ENCODE measurements at regions of chr21 and their contacts with region 1.

Region 1: GRCh38 chr21:36927719-36928117 is 38.8 kb downstream of the HLCS start:
- DNase-seq: peak; percentile 80
- H3K4me3 ChIP-seq: no peak overlapping the region
- H3K27ac ChIP-seq: no peak overlapping the region
- H3K4me1 ChIP-seq: no peaks in the 10 kb centered on the region
- H3K27me3 ChIP-seq: no peaks in the 10 kb centered on the region
- CTCF ChIP-seq: peak; percentile 82 to 89
- POLR2A ChIP-seq: no peak

Region 2: GRCh38 chr21:36504067-36505058 is 423.4 kb before region 1 on chr21:
- CTCF ChIA-PET with region 1: interaction called, 7 read pairs
- POLR2A ChIA-PET with region 1: no interaction called
- dilution Hi-C with region 1: no loop called
- intact Hi-C with region 1: loop called (anchors 1 kb)
- DNase-seq: peak; percentile 55
- H3K4me3 ChIP-seq: no peak overlapping the region
- H3K27ac ChIP-seq: no peak overlapping the region
- H3K4me1 ChIP-seq: no peaks in the 10 kb centered on the region
- H3K27me3 ChIP-seq: no peaks in the 10 kb centered on the region
- CTCF ChIP-seq: peak; percentile 61 to 67
- POLR2A ChIP-seq: no peak

Region 3: DNA sequence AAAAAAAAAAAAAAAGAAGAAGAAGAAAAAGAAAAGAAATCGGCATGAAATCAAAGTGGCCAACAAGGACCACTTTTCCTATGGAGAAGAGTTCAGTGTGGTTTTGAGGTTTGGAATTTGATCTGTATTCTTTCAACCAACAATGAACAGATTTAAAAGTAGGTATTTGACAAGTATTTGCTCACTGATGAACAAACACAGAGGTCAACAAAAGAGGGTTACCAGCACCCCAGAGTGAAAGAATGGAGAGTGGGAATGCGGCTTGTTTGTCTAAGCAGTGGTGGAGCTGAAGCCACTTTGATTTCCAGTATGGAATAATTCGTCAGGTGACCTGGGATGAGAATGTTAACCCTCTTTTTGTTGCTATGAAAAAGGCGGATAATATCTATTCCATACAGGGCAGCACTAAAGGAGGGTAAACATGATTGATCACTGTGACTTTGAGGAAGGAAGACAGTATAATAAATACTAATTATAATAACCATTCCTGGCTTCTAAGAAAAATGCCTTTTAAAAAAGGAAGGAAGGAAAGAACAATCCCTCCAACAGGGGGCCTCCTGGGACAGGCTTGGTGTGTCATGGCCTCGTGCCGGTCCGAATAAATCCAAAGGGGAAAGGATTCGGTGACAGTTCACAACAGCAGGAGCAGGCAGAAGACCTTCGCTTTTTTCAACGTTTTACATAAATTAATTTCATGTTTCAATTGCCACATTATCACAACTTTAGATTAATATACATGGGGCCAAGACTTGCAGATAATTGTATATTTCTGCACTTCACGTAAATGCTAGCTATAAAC is 266.0 kb before region 1 on chr21:
- CTCF ChIA-PET with region 1: interaction called, 12 read pairs
- POLR2A ChIA-PET with region 1: no interaction called
- dilution Hi-C with region 1: no loop called
- intact Hi-C with region 1: loop called (anchors 1 kb)
- DNase-seq: peak; percentile 41
- H3K4me3 ChIP-seq: no peak overlapping the region
- H3K27ac ChIP-seq: no peak overlapping the region
- H3K4me1 ChIP-seq: no peaks in the 10 kb centered on the region
- H3K27me3 ChIP-seq: peaks cover 16 to 27% of the 10 kb centered on the region in 2 experiments
- CTCF ChIP-seq: peak; percentile 47 to 51
- POLR2A ChIP-seq: no peak

Region 4: GRCh38 chr21:36698981-36699891 is 228.5 kb before region 1 on chr21 and contains the start of gene SIM2:
- CTCF ChIA-PET with region 1: no interaction called
- POLR2A ChIA-PET with region 1: no interaction called
- dilution Hi-C with region 1: no loop called
- intact Hi-C with region 1: loop called (anchors 5 kb)
- DNase-seq: no peak
- H3K4me3 ChIP-seq: peak within 1 kb of the TSS in 1 of 3 experiments; percentile 6
- H3K27ac ChIP-seq: no peak within 1 kb of the TSS
- H3K4me1 ChIP-seq: peaks cover 23% of the 10 kb centered on the region
- H3K27me3 ChIP-seq: peaks cover 88 to 98% of the 10 kb centered on the region in 2 experiments
- CTCF ChIP-seq: no peak
- POLR2A ChIP-seq: no peak
- total RNA-seq, gene SIM2: not detected in 2 replicates

Region 5: DNA sequence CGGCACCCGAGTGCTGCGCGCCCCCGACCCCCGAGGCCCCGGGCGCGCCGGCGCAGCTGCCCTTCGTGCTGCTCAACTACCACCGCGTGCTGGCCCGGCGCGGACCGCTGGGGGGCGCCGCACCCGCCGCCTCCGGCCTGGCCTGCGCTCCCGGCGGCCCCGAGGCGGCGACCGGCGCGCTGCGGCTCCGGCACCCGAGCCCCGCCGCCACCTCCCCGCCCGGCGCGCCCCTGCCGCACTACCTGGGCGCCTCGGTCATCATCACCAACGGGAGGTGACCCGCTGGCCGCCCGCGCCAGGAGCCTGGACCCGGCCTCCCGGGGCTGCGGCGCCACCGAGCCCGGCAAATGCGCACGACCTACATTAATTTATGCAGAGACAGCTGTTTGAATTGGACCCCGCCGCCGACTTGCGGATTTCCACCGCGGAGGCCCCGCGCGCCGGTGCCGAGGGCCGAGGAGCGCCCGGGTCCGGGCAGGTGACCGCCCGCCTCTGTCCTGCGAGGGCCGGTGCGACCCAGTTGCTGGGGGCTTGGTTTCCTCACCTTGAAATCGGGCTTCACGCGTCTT is 179.8 kb before region 1 on chr21:
- CTCF ChIA-PET with region 1: interaction called, 29 read pairs
- POLR2A ChIA-PET with region 1: no interaction called
- dilution Hi-C with region 1: no loop called
- intact Hi-C with region 1: loop called (anchors 1 kb)
- DNase-seq: peak; percentile 35
- H3K4me3 ChIP-seq: peak overlapping the region; percentile 16 to 37 (median 16)
- H3K27ac ChIP-seq: no peak overlapping the region
- H3K4me1 ChIP-seq: peaks cover 7% of the 10 kb centered on the region
- H3K27me3 ChIP-seq: peaks cover 0 to 8% of the 10 kb centered on the region in 2 experiments
- CTCF ChIP-seq: peak; percentile 20 to 39
- POLR2A ChIP-seq: no peak

Region 6: DNA sequence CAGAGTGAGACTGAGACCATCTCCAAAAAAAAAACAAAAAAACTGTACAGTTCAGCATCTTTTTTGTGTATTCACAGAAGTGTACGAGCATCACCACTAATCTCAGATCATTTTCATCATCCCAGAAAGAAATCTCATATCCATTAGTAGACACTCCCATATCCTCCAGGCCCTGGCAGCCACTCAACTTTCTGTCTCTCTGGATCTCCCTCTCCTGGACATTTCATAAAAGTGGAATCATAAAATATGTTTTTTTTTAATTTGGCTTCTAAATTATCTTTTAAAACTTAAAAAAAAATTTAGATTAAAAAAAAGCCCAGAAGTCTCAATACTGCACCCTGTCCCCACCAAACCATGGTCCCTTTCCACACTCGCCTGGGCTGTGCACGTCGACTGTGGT is 100.9 kb after region 1 on chr21:
- CTCF ChIA-PET with region 1: no interaction called
- POLR2A ChIA-PET with region 1: no interaction called
- dilution Hi-C with region 1: no loop called
- intact Hi-C with region 1: no loop called
- DNase-seq: no peak
- H3K4me3 ChIP-seq: no peak overlapping the region
- H3K27ac ChIP-seq: no peak overlapping the region
- H3K4me1 ChIP-seq: no peaks in the 10 kb centered on the region
- H3K27me3 ChIP-seq: peaks cover 4 to 7% of the 10 kb centered on the region in 2 experiments
- CTCF ChIP-seq: no peak
- POLR2A ChIP-seq: no peak

Region 7: DNA sequence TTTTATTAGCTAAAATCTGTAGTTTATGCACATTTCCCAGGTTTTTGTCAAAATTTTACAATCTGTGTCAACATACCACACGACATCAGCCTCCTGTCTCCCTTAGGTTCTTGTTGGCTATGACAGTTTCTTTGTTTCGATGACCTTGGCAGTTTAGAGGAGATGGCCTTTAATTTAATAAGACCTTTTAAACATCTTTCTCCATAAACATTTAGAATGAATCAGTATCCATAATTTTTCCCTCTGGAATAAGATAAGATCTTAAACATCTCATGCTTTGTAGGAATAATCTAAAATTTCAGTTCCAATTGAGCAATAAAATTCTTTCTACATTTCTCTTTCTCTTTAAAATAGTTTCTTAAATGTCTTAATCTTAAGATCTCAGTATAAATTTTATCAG is 410.1 kb after region 1 on chr21:
- CTCF ChIA-PET with region 1: no interaction called
- POLR2A ChIA-PET with region 1: no interaction called
- dilution Hi-C with region 1: no loop called
- intact Hi-C with region 1: no loop called
- DNase-seq: no peak
- H3K4me3 ChIP-seq: no peak overlapping the region
- H3K27ac ChIP-seq: peak overlapping the region; percentile 88
- H3K4me1 ChIP-seq: peaks cover 36% of the 10 kb centered on the region
- H3K27me3 ChIP-seq: no peaks in the 10 kb centered on the region
- CTCF ChIP-seq: no peak
- POLR2A ChIP-seq: no peak